Calu3 (cell line): ENCODE measurements at regions of chr14 and their contacts with region 1.

Region 1: DNA sequence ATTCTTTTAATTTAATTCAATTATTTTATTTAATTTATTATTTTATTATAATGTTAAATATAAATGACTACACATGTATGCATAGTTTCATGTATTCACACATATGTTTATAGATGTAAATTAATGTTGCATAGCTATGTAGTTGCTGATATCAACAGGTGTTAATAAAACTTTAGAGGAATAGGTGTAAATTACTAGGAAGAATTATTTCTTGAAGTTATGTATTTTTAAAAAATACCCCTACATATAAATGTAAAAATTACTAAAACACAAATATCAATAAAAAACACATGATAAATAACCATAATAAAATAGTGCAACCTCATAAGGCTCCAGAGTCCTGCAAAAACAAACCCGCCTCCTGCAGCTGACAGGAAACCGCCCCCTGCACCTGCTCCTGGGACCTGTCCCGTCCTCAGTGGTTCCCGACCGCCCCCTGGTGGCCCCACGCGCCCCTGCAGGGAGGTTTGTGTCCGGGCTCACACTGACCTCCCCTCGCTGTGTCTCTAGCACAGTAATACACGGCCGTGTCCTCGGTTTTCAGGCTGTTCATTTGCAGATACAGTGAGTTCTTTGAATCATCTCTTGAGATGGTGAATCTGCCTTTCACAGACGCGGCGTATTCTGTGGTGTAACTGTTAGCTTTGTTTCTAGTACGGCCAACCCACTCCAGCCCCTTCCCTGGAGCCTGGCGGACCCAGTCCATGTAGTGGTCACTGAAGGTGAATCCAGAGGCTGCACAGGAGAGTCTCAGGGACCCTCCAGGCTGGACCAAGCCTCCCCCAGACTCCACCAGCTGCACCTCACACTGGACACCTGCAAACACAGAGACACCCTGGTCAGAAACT is 1264.0 kb downstream of the TMEM121 start:
- DNase-seq: peak; percentile 92
- H3K4me3 Mint-ChIP-seq: no peak overlapping the region
- H3K27ac Mint-ChIP-seq: no peak overlapping the region
- H3K4me1 Mint-ChIP-seq: peaks cover 8% of the 10 kb centered on the region
- H3K27me3 Mint-ChIP-seq: peaks cover 9% of the 10 kb centered on the region
- CTCF ChIP-seq: peak; percentile 90

Region 2: GRCh38 chr14:106738075-106738474 is 52.3 kb before region 1 on chr14:
- CTCF ChIA-PET with region 1: no interaction called
- intact Hi-C with region 1: no loop called
- DNase-seq: no peak
- H3K4me3 Mint-ChIP-seq: no peak overlapping the region
- H3K27ac Mint-ChIP-seq: no peak overlapping the region
- H3K4me1 Mint-ChIP-seq: no peaks in the 10 kb centered on the region
- H3K27me3 Mint-ChIP-seq: no peaks in the 10 kb centered on the region
- CTCF ChIP-seq: no peak

Region 3: DNA sequence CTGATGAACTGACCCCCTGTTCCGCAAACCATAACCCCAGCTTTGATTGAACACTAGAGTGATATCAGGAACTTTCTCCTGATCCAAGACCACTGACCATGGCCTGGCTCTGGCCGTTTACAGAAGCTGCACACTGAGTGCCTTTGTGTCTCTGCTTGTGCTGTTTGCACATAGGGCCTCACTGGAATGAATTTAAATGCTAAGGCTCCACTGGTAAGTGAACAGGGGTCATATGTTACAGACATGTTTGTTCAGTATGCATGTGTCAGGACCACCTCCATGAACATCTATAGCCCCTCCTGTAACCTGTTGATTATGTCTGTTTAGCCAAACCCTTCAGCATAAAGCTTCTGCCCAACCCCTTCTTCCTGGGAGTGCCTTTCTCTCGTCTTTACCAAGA is 24.3 kb before region 1 on chr14:
- CTCF ChIA-PET with region 1: no interaction called
- intact Hi-C with region 1: loop called (anchors 2 kb)
- DNase-seq: no peak
- H3K4me3 Mint-ChIP-seq: no peak overlapping the region
- H3K27ac Mint-ChIP-seq: no peak overlapping the region
- H3K4me1 Mint-ChIP-seq: no peaks in the 10 kb centered on the region
- H3K27me3 Mint-ChIP-seq: peaks cover 14% of the 10 kb centered on the region
- CTCF ChIP-seq: no peak

Region 4: GRCh38 chr14:106844608-106845285 is 54.3 kb after region 1 on chr14:
- CTCF ChIA-PET with region 1: interaction called, 3 read pairs
- intact Hi-C with region 1: loop called (anchors 5 kb)
- DNase-seq: peak; percentile 81
- H3K4me3 Mint-ChIP-seq: peak overlapping the region; percentile 94
- H3K27ac Mint-ChIP-seq: peak overlapping the region; percentile 97
- H3K4me1 Mint-ChIP-seq: peaks cover 50% of the 10 kb centered on the region
- H3K27me3 Mint-ChIP-seq: no peaks in the 10 kb centered on the region
- CTCF ChIP-seq: no peak